PC-3 (cell line): ENCODE measurements at regions of chr2 and their contacts with region 1.

Region 1: DNA sequence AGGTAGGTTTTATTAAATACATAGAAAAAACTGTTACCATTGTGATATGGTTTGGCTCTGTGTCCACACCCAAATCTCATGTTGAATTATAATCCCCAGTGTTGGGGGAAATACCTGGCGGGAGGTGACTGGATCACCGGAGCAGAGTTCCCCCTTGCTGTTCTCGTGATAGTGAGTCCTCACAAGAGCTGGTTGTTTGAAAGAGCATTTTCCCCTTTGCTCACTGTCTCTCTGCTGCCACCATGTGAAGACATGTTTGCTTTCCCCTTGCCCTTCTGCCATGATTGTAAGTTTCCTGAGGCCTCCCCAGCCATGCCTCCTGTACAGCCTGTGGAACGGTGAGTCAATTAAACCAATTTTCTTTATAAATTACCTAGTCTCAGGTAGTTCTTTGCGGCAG is 352.7 kb upstream of the SLC39A10 start:
- DNase-seq: peak; percentile 45
- ATAC-seq: peak; percentile 57
- H3K4me3 ChIP-seq: no peak overlapping the region
- H3K27ac ChIP-seq: no peak overlapping the region
- H3K4me1 ChIP-seq: no peaks in the 10 kb centered on the region
- H3K27me3 ChIP-seq: no peaks in the 10 kb centered on the region
- CTCF ChIP-seq: peak; percentile 53; the same call in 1 of the 2 replicates

Region 2: DNA sequence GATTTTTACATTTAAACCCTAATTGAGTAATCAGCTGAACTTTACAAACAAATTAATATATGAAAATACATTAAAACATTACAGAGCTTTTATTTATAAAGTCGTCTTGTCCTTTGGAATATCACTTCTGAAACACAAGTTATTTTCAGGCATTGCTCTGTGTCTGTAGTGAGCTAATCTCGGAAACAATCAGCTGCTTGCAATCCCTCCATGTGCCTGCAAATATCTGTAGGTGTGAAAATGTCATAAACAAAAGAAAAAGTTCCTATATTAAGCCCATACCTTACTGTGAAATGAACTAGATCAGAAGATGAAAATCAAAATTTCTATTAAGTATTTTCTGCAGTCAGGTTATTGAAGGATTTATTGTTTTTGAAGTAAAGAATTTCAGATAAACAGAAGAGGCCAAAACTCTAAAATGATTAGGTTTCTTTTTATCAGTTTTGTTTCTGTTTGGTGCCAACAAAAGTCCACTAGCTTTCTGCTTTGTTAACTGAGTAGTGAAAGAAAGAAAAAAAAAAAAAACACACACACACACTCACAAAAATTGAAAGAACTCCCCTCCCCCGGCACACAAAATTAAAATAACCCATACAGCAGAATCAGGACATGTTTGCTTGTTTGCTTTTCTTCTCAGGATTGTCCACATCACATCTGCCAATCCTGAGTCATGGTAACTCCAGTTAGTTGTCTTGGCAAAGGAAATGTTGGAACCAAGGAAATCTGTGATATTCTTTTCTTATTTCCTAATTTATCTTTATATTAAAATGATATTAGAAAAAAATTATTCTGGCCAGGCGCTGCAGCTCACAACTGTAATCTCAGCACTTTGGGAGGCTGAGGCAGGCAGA is 274.3 kb before region 1 on chr2:
- CTCF ChIA-PET with region 1: no interaction called
- POLR2A ChIA-PET with region 1: no interaction called
- intact Hi-C with region 1: loop called (anchors 10 kb)
- DNase-seq: peak; percentile 27
- ATAC-seq: peak; percentile 61
- H3K4me3 ChIP-seq: no peak overlapping the region
- H3K27ac ChIP-seq: no peak overlapping the region
- H3K4me1 ChIP-seq: 0 out of 2 replicates have a peak, but pooled peaks cover 11% of the 10 kb centered on the region
- H3K27me3 ChIP-seq: no peaks in the 10 kb centered on the region
- CTCF ChIP-seq: no peak

Region 3: GRCh38 chr2:195181059-195181705 is 123.1 kb before region 1 on chr2:
- CTCF ChIA-PET with region 1: no interaction called
- POLR2A ChIA-PET with region 1: no interaction called
- intact Hi-C with region 1: no loop called
- DNase-seq: peak; percentile 22
- ATAC-seq: peak; percentile 42
- H3K4me3 ChIP-seq: no peak overlapping the region
- H3K27ac ChIP-seq: no peak overlapping the region
- H3K4me1 ChIP-seq: no peaks in the 10 kb centered on the region
- H3K27me3 ChIP-seq: no peaks in the 10 kb centered on the region
- CTCF ChIP-seq: no peak

Region 4: DNA sequence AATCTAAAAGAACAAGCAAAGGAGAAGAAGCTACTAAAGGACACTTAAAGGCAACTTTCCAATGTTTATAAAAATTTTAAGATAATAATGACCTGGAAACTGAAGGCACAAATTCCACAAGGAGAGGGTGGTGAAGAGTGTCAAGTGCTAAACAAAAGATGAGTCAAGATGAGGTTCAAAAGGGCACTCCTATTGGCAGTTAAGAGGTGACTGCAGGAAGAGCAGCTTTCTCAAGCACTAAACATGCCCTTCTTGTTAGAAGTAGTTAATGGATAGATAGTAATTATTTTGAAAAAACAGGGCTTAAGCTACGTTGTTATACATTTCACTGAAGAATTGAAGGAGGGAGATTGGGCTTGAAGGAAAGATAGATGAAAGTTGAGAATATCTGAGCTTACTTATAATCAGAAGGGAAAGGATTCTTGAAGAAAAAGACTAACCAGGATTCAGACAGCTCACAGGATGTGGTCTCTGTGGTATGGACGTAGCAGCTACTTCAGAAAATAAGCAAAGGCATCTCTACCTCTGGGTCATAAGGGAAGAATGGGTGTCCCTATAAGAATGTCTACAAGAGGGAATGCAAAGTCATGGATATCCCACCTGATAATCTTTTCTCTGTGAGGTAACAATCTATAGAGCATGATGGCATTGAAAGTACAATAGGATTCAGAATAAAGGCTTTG is 102.0 kb before region 1 on chr2:
- CTCF ChIA-PET with region 1: no interaction called
- POLR2A ChIA-PET with region 1: no interaction called
- intact Hi-C with region 1: no loop called
- DNase-seq: peak; percentile 14
- ATAC-seq: no peak; the same call in 1 of the 2 replicates
- H3K4me3 ChIP-seq: no peak overlapping the region
- H3K27ac ChIP-seq: no peak overlapping the region
- H3K4me1 ChIP-seq: no peaks in the 10 kb centered on the region
- H3K27me3 ChIP-seq: no peaks in the 10 kb centered on the region
- CTCF ChIP-seq: no peak

Region 5: GRCh38 chr2:195392446-195393336 is 88.4 kb after region 1 on chr2:
- CTCF ChIA-PET with region 1: no interaction called
- POLR2A ChIA-PET with region 1: no interaction called
- intact Hi-C with region 1: no loop called
- DNase-seq: no peak
- ATAC-seq: no peak
- H3K4me3 ChIP-seq: no peak overlapping the region
- H3K27ac ChIP-seq: no peak overlapping the region
- H3K4me1 ChIP-seq: peaks cover 7% of the 10 kb centered on the region
- H3K27me3 ChIP-seq: no peaks in the 10 kb centered on the region
- CTCF ChIP-seq: no peak